GM10248 (cell line): ENCODE measurements at regions of chr2 and their contacts with region 1.

Region 1: GRCh38 chr2:63676135-63676534 is 87.4 kb downstream of the MDH1 start:
- DNase-seq: no peak
- CTCF ChIP-seq: no peak

Region 2: DNA sequence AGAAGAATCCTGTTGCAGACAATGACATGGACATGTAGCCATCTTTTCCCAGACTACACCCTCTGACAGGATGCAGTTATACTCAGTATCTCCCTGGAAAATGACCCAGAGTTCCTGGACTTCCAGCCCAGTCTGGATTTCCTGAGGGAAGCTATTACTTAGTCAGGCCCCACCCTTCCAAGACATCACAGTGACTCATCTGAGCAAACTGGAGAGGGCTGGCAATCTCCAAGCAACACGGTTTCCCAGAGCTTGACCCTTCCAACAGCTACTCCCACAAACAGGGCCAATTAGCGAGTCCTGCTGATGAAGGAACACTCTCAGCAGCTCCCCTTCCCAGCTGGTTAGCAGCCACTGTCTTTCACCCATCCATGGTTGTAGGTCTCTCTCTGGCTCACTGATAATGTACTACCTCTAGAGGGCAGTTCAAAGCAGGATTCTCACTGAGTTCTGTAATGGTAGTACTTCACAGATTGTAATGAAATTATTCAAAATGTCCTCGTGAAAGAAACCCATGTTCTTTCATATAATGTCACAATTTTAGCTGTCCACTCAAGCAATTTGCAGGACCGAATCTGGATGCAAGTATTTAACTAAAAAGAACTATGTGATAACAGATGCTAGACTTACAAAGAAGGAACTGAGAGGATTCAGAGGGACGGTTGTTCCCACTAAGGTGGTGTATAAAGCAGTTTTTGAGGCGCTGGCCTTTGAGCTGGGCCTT is 22.9 kb after region 1 on chr2:
- CTCF ChIA-PET with region 1: interaction called, 12 read pairs
- POLR2A ChIA-PET with region 1: no interaction called
- DNase-seq: peak; percentile 41
- CTCF ChIP-seq: peak; percentile 68